MCF 10A (cell line): ENCODE measurements at regions of chrX and their contacts with region 1.

Region 1: GRCh38 chrX:110317820-110318658 is at the start of gene AMMECR1:
- DNase-seq: peak; percentile 71
- H3K4me3 Mint-ChIP-seq: peak within 1 kb of the TSS; percentile 89
- H3K27ac Mint-ChIP-seq: peak within 1 kb of the TSS; percentile 95
- H3K4me1 Mint-ChIP-seq: peaks cover 6% of the 10 kb centered on the region
- H3K27me3 Mint-ChIP-seq: peaks cover 32% of the 10 kb centered on the region
- CTCF ChIP-seq: no peak
- total RNA-seq, gene AMMECR1: 20.8 and 27.0 TPM in 2 replicates

Region 2: GRCh38 chrX:110156167-110156754 is 161.8 kb before region 1 on chrX:
- CTCF ChIA-PET with region 1: interaction called, 4 read pairs
- POLR2A ChIA-PET with region 1: interaction called, 10 read pairs
- intact Hi-C with region 1: loop called (anchors 1 kb)
- DNase-seq: peak; percentile 29
- H3K4me3 Mint-ChIP-seq: no peak overlapping the region
- H3K27ac Mint-ChIP-seq: no peak overlapping the region
- H3K4me1 Mint-ChIP-seq: peaks cover 12% of the 10 kb centered on the region
- H3K27me3 Mint-ChIP-seq: peaks cover 43% of the 10 kb centered on the region
- CTCF ChIP-seq: peak; percentile 34

Region 3: DNA sequence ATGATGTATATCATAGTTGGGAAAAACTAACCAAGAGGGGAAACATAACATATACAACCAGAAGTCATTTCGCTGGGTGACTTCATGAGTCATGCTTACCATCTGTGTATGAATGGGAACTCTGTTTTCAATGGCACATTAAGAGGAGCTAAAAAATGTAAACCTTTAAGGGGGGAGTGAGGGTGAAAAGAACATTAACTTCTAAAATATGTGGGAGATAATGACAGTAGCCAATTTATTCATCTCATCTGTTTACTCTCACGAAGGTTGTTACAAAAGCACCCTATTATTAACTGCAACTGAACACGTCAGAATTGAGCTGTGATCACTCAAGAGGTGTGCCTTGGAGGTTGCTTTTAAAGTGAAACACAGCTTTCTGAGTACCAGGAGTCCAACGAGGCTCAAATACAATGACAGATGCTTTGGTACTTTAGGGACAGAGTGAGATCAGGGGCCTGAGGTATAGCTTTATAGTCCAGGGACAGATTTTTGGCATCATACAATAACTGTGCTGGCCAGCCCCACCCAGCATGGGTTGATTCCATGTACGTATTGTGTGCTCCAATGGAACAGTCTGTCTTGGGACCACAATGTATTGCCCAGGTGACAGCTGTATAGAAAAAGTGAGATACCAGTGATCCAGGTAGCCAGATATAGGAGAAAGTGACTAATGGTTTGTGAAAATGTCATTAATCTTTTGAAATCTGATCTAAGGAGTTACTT is 107.5 kb before region 1 on chrX:
- CTCF ChIA-PET with region 1: interaction called, 3 read pairs
- POLR2A ChIA-PET with region 1: interaction called, 23 read pairs
- intact Hi-C with region 1: loop called (anchors 5 kb)
- DNase-seq: peak; percentile 61
- H3K4me3 Mint-ChIP-seq: peak overlapping the region; percentile 44
- H3K27ac Mint-ChIP-seq: peak overlapping the region; percentile 85
- H3K4me1 Mint-ChIP-seq: peaks cover 14% of the 10 kb centered on the region
- H3K27me3 Mint-ChIP-seq: peaks cover 57% of the 10 kb centered on the region
- CTCF ChIP-seq: no peak

Region 4: DNA sequence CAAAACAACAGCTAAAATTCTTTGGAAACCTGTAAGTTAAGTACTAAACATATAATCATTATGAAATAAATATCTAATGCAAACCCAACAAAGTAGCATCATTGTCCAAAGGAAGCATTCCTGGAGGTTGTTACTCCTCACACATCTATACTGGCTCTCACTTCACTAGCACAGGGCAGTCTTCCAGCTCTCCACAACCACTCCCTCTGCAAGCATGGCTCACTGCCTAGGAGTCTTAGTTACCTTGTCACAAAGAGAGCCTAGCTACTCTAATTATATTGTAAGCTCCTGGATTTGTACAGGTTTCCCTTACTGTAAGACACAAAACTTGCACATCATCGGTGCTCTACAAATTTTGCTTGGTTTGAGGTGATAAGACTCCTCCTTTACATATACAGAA is 76.2 kb before region 1 on chrX:
- CTCF ChIA-PET with region 1: no interaction called
- POLR2A ChIA-PET with region 1: no interaction called
- intact Hi-C with region 1: loop called (anchors 5 kb)
- DNase-seq: peak; percentile 41
- H3K4me3 Mint-ChIP-seq: no peak overlapping the region
- H3K27ac Mint-ChIP-seq: no peak overlapping the region
- H3K4me1 Mint-ChIP-seq: peaks cover 9% of the 10 kb centered on the region
- H3K27me3 Mint-ChIP-seq: peaks cover 68% of the 10 kb centered on the region
- CTCF ChIP-seq: no peak

Region 5: GRCh38 chrX:110338915-110339314 is 20.9 kb after region 1 on chrX:
- CTCF ChIA-PET with region 1: no interaction called
- POLR2A ChIA-PET with region 1: interaction called, 30 read pairs
- intact Hi-C with region 1: no loop called
- DNase-seq: peak; percentile 43
- H3K4me3 Mint-ChIP-seq: no peak overlapping the region
- H3K27ac Mint-ChIP-seq: no peak overlapping the region
- H3K4me1 Mint-ChIP-seq: peaks cover 4% of the 10 kb centered on the region
- H3K27me3 Mint-ChIP-seq: peaks cover 14% of the 10 kb centered on the region
- CTCF ChIP-seq: no peak

Region 6: GRCh38 chrX:110402479-110403230 is 84.6 kb after region 1 on chrX:
- CTCF ChIA-PET with region 1: interaction called, 12 read pairs
- POLR2A ChIA-PET with region 1: interaction called, 55 read pairs
- intact Hi-C with region 1: loop called (anchors 2 kb)
- DNase-seq: peak; percentile 76
- H3K4me3 Mint-ChIP-seq: no peak overlapping the region
- H3K27ac Mint-ChIP-seq: peak overlapping the region; percentile 85
- H3K4me1 Mint-ChIP-seq: peaks cover 18% of the 10 kb centered on the region
- H3K27me3 Mint-ChIP-seq: peaks cover 86% of the 10 kb centered on the region
- CTCF ChIP-seq: no peak